Activated CD8-positive, alpha-beta memory T cell treated with anti-CD3 and anti-CD28 coated beads, Interleukin-2, amount 10 ng/mL, durations not matched to agents 7 days and 5 days (primary cell): ENCODE measurements at regions of chr20 and their contacts with region 1.

Region 1: GRCh38 chr20:35329435-35330139 is 37.4 kb upstream of the FAM83C start:
- DNase-seq: peak; percentile 76
- ATAC-seq: peak; percentile 82
- H3K4me3 Mint-ChIP-seq: no peak overlapping the region
- H3K27ac Mint-ChIP-seq: no peak overlapping the region
- H3K4me1 Mint-ChIP-seq: peaks cover 9% of the 10 kb centered on the region
- H3K27me3 Mint-ChIP-seq: no peaks in the 10 kb centered on the region

Region 2: GRCh38 chr20:35166242-35166830 is 163.3 kb before region 1 on chr20:
- CTCF ChIA-PET with region 1: no interaction called
- DNase-seq: no peak
- ATAC-seq: no peak
- H3K4me3 Mint-ChIP-seq: no peak overlapping the region
- H3K27ac Mint-ChIP-seq: no peak overlapping the region
- H3K4me1 Mint-ChIP-seq: peaks cover 9% of the 10 kb centered on the region
- H3K27me3 Mint-ChIP-seq: no peaks in the 10 kb centered on the region

Region 3: DNA sequence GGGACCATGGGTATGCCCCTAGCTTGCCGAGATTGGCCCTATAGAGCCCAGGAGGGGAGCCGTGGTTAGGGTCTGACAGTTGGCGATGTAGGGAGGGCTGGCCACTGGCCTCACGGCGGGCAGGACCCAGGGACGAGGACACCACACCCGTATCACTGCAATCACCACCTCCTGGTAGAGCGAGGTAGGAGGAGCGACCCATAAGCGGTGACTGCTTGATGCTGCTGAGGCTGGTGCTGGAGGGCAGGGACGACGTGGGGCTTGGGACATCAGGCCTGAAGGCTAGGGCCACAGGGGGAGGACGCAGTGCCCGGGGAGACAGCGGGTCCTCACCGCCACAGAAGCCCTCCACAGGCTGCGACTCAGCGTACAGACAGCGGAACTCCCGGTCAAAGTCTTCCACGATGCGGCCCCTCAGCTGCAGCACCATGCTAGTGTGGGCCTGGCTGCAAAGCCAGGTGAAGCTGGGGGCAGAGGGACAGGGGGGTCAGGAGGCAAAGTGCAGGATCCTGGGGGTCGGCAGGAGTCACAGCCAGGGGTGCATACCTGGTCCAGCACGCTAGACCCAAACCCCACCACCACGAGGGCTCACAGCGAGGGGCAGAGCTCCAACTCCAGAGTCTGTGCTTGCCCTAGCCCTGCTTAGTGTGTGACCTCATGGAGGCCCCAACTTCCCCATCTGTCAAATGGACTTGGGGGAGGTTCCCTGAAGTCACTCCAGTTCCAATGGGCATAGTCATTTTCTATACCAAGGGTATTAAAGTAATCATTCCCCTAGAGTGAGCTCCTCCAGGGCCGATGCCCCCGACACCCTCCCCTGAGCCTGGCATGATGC is 41.9 kb before region 1 on chr20:
- CTCF ChIA-PET with region 1: no interaction called
- DNase-seq: no peak
- ATAC-seq: no peak
- H3K4me3 Mint-ChIP-seq: no peak overlapping the region
- H3K27ac Mint-ChIP-seq: no peak overlapping the region
- H3K4me1 Mint-ChIP-seq: peaks cover 21% of the 10 kb centered on the region
- H3K27me3 Mint-ChIP-seq: peaks cover 6% of the 10 kb centered on the region

Region 4: DNA sequence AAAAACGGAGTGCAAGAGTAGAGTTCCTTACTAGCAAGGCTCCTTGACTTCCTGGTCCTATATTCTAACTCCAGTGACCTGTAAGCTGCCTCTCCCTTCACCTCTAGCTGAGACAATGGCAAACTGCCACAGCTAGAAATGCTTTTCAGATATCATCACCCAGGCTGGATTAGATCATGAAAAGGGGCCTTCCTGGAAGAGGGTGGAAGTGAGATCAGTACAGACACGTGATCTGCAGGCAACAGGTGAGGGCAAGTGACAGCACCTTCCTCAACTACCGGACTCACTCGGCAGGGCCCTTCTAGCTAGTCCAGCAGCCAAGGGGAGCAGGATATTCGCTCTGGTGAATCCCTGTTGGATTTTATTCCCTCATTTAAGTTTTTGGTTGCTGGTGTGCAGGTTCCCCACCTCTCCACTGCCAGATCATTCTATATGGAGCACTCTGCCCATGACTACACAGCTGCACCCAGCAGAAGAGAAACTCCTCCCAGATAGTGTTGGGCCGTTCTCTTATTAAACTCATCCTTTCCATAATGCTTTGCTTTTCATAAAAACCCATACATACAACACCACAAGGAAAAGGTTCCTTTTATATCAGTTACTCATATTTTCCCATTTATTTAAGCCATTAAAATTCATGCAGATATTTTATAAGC is 11.0 kb before region 1 on chr20:
- CTCF ChIA-PET with region 1: interaction called, 19 read pairs
- DNase-seq: no peak
- ATAC-seq: no peak
- H3K4me3 Mint-ChIP-seq: no peak overlapping the region
- H3K27ac Mint-ChIP-seq: peak overlapping the region; percentile 54
- H3K4me1 Mint-ChIP-seq: peaks cover 50% of the 10 kb centered on the region
- H3K27me3 Mint-ChIP-seq: no peaks in the 10 kb centered on the region